H1 (cell line): ENCODE measurements at regions of chr3 and their contacts with region 1.

Region 1: DNA sequence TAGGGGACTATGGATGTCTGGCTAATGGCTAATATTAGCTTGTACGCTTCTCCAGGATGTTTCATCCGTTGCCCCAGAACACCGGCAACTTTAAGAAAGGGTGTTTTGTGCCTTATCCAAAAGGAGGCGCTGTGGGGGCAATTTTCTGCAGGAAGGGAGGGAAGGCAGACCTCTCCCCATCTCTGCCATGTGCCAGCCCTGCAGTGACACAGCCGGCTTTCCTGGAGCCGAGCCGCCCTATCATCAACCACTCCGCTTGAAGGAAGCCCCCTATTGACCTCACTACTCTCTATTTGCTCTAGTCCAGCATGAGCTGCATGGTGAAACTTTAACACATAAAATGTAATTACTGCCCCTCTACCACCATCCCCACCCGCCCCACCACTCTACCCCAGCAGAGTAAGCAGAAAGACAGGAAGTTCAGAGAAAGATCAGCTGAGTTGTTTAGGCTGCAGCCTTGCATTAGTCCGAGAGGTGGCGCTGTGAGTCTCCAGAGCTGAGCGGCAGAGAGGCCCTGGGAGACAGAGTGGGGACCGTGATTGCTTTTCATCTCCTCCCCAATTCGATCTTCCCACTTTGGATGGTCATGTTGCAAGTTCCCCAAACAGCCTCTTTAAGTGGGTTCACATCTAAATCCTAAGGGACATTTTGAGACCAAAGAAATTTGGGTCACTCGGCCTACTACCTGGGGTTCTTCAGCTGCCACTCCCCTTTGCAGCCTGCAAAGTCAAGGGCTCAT is 24.5 kb upstream of the RAD18 start:
- DNase-seq: peak; percentile 50 to 88
- H3K4me3 ChIP-seq: peak overlapping the region in 2 of 4 experiments; percentile 11 to 43; a peak in 3 of 8 replicates
- H3K27ac ChIP-seq: no peak overlapping the region
- H3K4me1 ChIP-seq: peaks cover 0 to 5% (median 2%) of the 10 kb centered on the region in 4 experiments; a peak in 6 of 7 replicates
- H3K27me3 ChIP-seq: no peaks in the 10 kb centered on the region
- CTCF ChIP-seq: peak; percentile 78 to 94 (median 79)
- EP300 ChIP-seq: no peak
- POLR2A ChIP-seq: no peak
- RAD21 ChIP-seq: peak; percentile 82 to 87

Region 2: GRCh38 chr3:9008550-9009255 is 20.9 kb after region 1 on chr3:
- CTCF ChIA-PET with region 1: interaction called, 40 read pairs
- POLR2A ChIA-PET with region 1: no interaction called
- DNase-seq: no peak
- H3K4me3 ChIP-seq: no peak overlapping the region
- H3K27ac ChIP-seq: no peak overlapping the region
- H3K4me1 ChIP-seq: peaks cover 1 to 4% (median 2%) of the 10 kb centered on the region in 4 experiments; a peak in 4 of 7 replicates
- H3K27me3 ChIP-seq: no peaks in the 10 kb centered on the region
- CTCF ChIP-seq: no peak
- EP300 ChIP-seq: no peak
- POLR2A ChIP-seq: no peak
- RAD21 ChIP-seq: no peak

Region 3: DNA sequence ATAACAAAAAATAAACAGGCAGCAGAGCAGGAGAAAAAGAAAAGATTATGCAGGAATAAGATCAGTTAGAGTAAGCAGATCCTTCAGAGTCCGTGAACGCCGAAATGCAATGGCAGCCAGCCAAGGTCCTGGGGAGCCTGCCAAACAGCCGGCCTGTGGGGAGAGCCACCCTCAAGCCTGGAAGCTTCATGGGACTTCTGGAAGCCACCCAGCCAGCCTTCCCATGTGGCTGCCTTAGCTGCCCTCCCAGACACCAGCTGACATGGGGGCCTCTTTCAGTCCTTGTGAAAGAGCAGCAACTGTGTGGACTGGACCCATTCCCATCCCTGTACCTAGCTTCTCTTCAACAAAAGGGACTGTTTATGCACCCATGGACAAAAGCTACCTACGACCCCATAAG is 40.3 kb after region 1 on chr3:
- CTCF ChIA-PET with region 1: interaction called, 24 read pairs
- POLR2A ChIA-PET with region 1: no interaction called
- DNase-seq: no peak
- H3K4me3 ChIP-seq: no peak overlapping the region
- H3K27ac ChIP-seq: no peak overlapping the region
- H3K4me1 ChIP-seq: no peaks in the 10 kb centered on the region
- H3K27me3 ChIP-seq: no peaks in the 10 kb centered on the region
- CTCF ChIP-seq: no peak
- EP300 ChIP-seq: no peak
- POLR2A ChIP-seq: no peak
- RAD21 ChIP-seq: no peak

Region 4: DNA sequence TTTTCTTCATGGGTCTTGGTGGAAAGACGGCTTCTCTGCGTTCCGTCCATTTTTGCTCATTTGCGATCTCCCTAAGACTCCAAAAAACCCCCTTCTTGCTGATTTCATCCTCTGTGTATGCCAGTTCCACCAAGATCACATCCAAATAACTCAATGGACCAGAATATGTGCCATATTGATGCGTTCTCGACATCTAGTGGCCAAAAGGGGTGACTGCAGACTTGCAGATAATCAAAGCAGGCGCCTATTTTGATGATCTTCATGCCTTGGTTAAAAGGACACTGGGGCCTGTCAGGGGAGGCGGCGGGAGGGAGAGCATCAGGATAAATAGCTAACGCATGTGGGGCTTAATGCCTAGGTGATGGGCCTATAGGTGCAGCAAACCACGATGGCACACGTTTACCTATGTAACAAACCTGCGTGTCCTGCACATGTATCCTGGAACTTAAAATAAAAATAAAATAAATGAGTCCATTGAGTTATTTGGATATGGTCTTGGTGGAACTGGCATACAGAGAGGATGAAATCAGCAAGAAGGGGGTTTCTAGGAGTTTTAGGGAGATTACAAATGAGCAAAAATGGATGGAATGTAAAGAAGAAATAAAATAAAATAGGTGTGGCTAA is 79.7 kb after region 1 on chr3:
- CTCF ChIA-PET with region 1: interaction called, 91 read pairs
- POLR2A ChIA-PET with region 1: no interaction called
- DNase-seq: peak; percentile 31 to 65
- H3K4me3 ChIP-seq: no peak overlapping the region
- H3K27ac ChIP-seq: no peak overlapping the region
- H3K4me1 ChIP-seq: no peaks in the 10 kb centered on the region
- H3K27me3 ChIP-seq: no peaks in the 10 kb centered on the region
- CTCF ChIP-seq: peak; percentile 32 to 96 (median 94)
- EP300 ChIP-seq: no peak
- POLR2A ChIP-seq: no peak
- RAD21 ChIP-seq: peak; percentile 97

Region 5: GRCh38 chr3:9117220-9117619 is 129.4 kb after region 1 on chr3:
- CTCF ChIA-PET with region 1: interaction called, 27 read pairs
- POLR2A ChIA-PET with region 1: no interaction called
- DNase-seq: no peak
- H3K4me3 ChIP-seq: no peak overlapping the region
- H3K27ac ChIP-seq: no peak overlapping the region
- H3K4me1 ChIP-seq: no peaks in the 10 kb centered on the region; a peak in 1 of 7 replicates
- H3K27me3 ChIP-seq: no peaks in the 10 kb centered on the region; a peak in 1 of 7 replicates
- CTCF ChIP-seq: no peak
- EP300 ChIP-seq: no peak
- POLR2A ChIP-seq: no peak
- RAD21 ChIP-seq: no peak

Region 6: DNA sequence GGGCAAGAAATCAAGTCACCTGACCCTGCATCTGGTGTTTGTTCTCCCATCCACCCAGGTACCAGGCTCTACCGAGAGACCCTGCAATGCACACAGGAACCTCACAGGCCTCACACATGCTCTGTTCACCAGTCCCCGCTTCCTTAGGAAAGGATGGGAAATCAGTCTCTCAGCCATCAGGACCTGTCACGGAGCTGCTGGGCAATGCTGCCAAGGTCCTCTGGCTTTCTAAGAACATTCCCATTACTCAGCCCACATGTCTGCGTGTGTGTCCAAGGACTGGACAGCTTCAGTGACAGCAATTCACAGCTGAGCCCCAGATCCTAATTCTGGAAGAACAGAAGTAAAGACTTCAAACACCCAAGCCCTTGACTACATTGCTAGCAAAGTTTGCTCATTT is 268.2 kb after region 1 on chr3:
- CTCF ChIA-PET with region 1: interaction called, 45 read pairs
- POLR2A ChIA-PET with region 1: no interaction called
- DNase-seq: no peak
- H3K4me3 ChIP-seq: no peak overlapping the region
- H3K27ac ChIP-seq: no peak overlapping the region
- H3K4me1 ChIP-seq: peaks cover 0 to 4% (median 0%) of the 10 kb centered on the region in 4 experiments; a peak in 2 of 7 replicates
- H3K27me3 ChIP-seq: no peaks in the 10 kb centered on the region
- CTCF ChIP-seq: no peak
- EP300 ChIP-seq: no peak
- POLR2A ChIP-seq: no peak
- RAD21 ChIP-seq: no peak

Region 7: DNA sequence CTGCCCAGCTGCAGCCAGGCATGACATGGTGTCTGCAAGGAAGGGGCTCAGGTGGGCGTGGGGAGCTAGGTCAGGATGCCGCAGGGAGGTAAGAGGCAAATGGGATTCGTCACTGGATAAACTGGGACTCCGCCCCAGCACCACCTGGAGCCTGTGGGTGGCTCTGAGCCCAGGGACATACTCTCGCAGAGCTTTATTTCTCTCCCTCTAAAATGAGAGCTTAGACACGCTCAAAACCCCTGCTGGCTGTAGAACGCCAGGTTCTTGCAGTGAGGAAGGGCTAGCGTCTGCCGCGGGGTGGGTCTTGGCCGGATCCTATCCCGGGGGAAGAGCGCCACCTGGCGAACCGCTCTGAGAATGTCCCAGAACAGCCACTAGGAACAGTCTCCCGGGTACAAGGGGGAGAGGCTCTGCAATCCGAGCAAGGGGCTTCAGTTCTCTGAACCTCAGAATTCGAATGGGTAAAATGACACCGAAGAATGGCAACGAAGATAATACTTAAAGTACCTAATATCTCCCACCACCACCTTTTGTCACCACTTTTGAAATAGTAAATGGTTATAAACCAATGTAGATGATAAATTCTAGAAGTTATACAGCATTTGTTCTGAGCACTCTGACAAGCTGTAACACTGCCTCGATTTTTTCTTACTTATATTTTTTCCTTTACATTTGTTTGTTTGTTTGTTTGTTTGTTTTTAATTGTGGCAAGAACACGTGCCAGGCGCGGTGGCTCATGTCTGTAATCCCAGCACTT is 314.8 kb after region 1 on chr3:
- CTCF ChIA-PET with region 1: interaction called, 200 read pairs
- POLR2A ChIA-PET with region 1: interaction called, 4 read pairs
- DNase-seq: peak; percentile 79 to 93
- H3K4me3 ChIP-seq: peak overlapping the region in 3 of 4 experiments; percentile 23 to 59 (median 38); a peak in 6 of 8 replicates
- H3K27ac ChIP-seq: no peak overlapping the region
- H3K4me1 ChIP-seq: peaks cover 0 to 5% (median 3%) of the 10 kb centered on the region in 4 experiments; a peak in 5 of 7 replicates
- H3K27me3 ChIP-seq: peaks cover 0 to 2% (median under 1%) of the 10 kb centered on the region in 4 experiments; a peak in 1 of 7 replicates
- CTCF ChIP-seq: peak; percentile 70 to 98 (median 80)
- EP300 ChIP-seq: peak in 1 of 2 experiments; percentile 51; a peak in 1 of 3 replicates
- POLR2A ChIP-seq: no peak
- RAD21 ChIP-seq: peak; percentile 97 to 99